ENCODE measurements at regions of chr2 and their contacts with region 1.

Region 1: GRCh38 chr2:98691303-98691702 is 39.6 kb downstream of the MGAT4A start:
- DNase-seq: no peak
- H3K4me3 Mint-ChIP-seq: no peak overlapping the region
- H3K27ac Mint-ChIP-seq: peak overlapping the region; percentile 71
- H3K4me1 Mint-ChIP-seq: peaks cover 75% of the 10 kb centered on the region
- H3K27me3 Mint-ChIP-seq: no peaks in the 10 kb centered on the region

Region 2: DNA sequence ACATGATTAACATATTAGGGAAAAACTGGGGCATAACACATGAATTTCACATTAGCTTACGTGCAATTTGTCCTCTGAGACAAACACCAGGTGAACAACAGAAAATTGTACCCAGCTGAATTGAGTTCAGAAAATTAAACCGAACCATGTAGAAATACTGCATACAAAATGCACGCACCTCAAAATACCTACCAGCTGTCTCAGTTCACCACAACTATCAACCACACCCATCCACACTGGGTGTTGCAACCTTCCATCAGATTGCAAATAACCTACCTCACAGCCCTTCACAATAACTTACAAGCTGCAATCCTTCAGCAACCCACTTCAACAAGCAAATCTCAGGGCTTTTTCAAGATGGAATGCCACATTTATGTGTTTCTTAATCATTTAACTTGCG is 27.0 kb before region 1 on chr2:
- intact Hi-C with region 1: loop called (anchors 1 kb)
- DNase-seq: peak; percentile 56
- H3K4me3 Mint-ChIP-seq: peak overlapping the region; percentile 63
- H3K27ac Mint-ChIP-seq: peak overlapping the region; percentile 99
- H3K4me1 Mint-ChIP-seq: peaks cover 79% of the 10 kb centered on the region
- H3K27me3 Mint-ChIP-seq: no peaks in the 10 kb centered on the region

Region 3: DNA sequence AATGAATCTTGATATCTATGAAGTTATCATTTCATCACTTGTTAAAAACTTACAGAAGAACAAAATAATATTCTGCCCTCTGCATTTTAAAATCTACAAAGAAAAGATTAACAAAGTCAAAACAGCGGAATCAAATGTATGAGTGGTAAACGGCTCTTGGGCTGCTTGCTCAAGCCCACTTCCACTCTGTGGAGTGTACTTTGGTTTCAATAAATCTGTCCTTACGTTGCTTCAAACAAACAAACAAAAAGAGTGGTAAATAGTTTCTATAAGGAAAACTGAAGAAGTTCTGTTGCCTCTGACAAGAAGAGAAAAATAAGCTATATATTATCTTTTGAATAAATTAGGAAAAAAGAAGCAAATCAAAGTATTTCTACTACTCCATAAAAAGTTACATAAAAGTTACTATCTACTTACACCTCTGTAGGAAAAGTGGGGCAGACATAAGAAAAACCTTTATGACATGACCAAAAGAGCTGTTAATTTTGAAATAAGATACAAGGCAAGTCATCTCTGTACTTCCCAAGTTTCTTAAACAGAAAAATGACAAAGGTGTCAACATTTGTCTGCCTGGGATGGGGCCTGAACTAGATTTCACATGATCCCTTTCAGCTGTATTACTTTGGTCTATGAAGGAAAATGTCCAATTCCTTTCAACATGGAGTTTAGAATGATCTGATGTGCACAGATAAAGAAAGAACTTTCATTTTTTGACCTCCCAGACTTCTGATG is 16.9 kb before region 1 on chr2:
- intact Hi-C with region 1: loop called (anchors 2 kb)
- DNase-seq: no peak
- H3K4me3 Mint-ChIP-seq: no peak overlapping the region
- H3K27ac Mint-ChIP-seq: peak overlapping the region; percentile 57
- H3K4me1 Mint-ChIP-seq: peaks cover 40% of the 10 kb centered on the region
- H3K27me3 Mint-ChIP-seq: no peaks in the 10 kb centered on the region

Region 4: DNA sequence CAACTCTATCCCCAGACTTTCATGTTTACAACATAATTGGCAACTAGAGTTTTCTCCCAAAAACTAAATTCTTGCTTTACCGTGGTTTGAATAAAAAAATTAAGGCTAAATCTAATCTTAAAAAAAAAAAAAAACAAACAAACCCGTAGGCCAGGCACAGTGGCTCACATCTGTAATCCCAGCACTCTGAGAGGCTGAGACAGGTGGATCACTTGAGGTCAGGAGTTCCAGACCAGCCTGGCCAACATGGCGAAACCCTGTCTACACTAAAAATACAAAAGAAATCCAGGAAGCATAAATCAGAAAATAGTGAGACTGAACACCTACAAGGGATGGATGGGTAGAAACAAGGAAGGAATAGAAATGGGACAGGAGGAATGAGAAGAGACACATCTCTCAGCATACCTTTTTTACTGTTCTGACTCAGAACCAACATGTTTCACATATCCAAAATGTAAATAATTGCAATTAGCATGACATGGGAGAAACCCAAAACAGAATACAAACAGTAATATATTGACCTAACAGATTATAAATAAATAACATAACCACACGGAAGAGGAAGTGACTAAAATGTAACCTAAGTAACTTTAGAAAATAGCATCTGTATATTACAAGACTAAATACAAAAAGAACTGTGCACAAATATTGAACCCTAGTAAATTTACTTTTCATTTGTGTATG is 22.2 kb after region 1 on chr2:
- intact Hi-C with region 1: loop called (anchors 2 kb)
- DNase-seq: no peak
- H3K4me3 Mint-ChIP-seq: no peak overlapping the region
- H3K27ac Mint-ChIP-seq: peak overlapping the region; percentile 41
- H3K4me1 Mint-ChIP-seq: peaks cover 83% of the 10 kb centered on the region
- H3K27me3 Mint-ChIP-seq: no peaks in the 10 kb centered on the region

Region 5: GRCh38 chr2:98731041-98731893 is 40.0 kb after region 1 on chr2 and contains the start of gene MGAT4A:
- intact Hi-C with region 1: loop called (anchors 1 kb)
- DNase-seq: peak; percentile 82
- H3K4me3 Mint-ChIP-seq: peak within 1 kb of the TSS; percentile 91
- H3K27ac Mint-ChIP-seq: peak within 1 kb of the TSS; percentile 87
- H3K4me1 Mint-ChIP-seq: peaks cover 80% of the 10 kb centered on the region
- H3K27me3 Mint-ChIP-seq: no peaks in the 10 kb centered on the region
- total RNA-seq, gene MGAT4A: 47.0 and 49.7 TPM in 2 replicates

Region 6: DNA sequence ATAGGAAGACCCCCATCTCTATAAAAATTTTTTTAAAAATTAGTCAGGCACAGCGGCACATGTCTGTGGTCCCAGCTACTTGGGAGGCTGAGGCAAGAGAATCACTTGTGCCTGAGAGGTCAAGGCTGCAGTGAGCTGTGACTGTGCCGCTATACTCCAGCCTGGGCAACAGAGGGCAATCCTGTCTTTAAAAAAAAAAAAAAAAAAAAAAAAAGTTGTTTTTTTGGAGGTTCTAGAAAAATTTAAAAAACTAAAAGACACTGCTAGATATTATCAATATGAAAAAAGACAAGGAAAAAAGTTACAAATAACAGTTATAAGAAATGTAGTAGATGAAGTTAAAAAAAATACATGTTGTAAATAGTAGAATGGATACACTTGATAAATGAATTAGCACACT is 394.1 kb after region 1 on chr2:
- intact Hi-C with region 1: no loop called
- DNase-seq: no peak
- H3K4me3 Mint-ChIP-seq: no peak overlapping the region
- H3K27ac Mint-ChIP-seq: no peak overlapping the region
- H3K4me1 Mint-ChIP-seq: no peaks in the 10 kb centered on the region
- H3K27me3 Mint-ChIP-seq: peaks cover 19% of the 10 kb centered on the region

Measured in activated T-helper 1 cell treated with anti-CD3 and anti-CD28 coated beads, Interleukin-12 subunit alpha, Interleukin-12 subunit beta, Interleukin-2, Interleukin-4 antibody, amounts not matched to agents 30 ng/mL and 10 ng/mL and 1 ng/mL, durations not matched to agents 14 hours and 24 hours and 36 hours (primary cell).